CD8-positive, alpha-beta T cell (primary cell): ENCODE measurements at regions of chr1 and their contacts with region 1.

Region 1: GRCh38 chr1:244964112-244964971 is 100.0 kb upstream of the HNRNPU start:
- DNase-seq: peak in 4 of 9 experiments; percentile 19 to 63 (median 36)
- ATAC-seq: no peak
- H3K4me3 ChIP-seq: no peak overlapping the region
- H3K4me3 Mint-ChIP-seq: no peak overlapping the region
- H3K27ac ChIP-seq: no peak overlapping the region
- H3K27ac Mint-ChIP-seq: no peak overlapping the region
- H3K4me1 ChIP-seq: peaks cover 17% of the 10 kb centered on the region
- H3K4me1 Mint-ChIP-seq: peaks cover 18% of the 10 kb centered on the region
- H3K27me3 ChIP-seq: no peaks in the 10 kb centered on the region
- H3K27me3 Mint-ChIP-seq: no peaks in the 10 kb centered on the region
- CTCF ChIP-seq: no peak

Region 2: GRCh38 chr1:244576259-244576892 is 388.0 kb before region 1 on chr1:
- CTCF ChIA-PET with region 1: no interaction called
- POLR2A ChIA-PET with region 1: no interaction called
- intact Hi-C with region 1: no loop called
- DNase-seq: no peak
- ATAC-seq: no peak
- H3K4me3 ChIP-seq: no peak overlapping the region
- H3K4me3 Mint-ChIP-seq: no peak overlapping the region
- H3K27ac ChIP-seq: no peak overlapping the region
- H3K27ac Mint-ChIP-seq: no peak overlapping the region
- H3K4me1 ChIP-seq: no peaks in the 10 kb centered on the region
- H3K4me1 Mint-ChIP-seq: no peaks in the 10 kb centered on the region
- H3K27me3 ChIP-seq: no peaks in the 10 kb centered on the region
- H3K27me3 Mint-ChIP-seq: no peaks in the 10 kb centered on the region
- CTCF ChIP-seq: no peak

Region 3: DNA sequence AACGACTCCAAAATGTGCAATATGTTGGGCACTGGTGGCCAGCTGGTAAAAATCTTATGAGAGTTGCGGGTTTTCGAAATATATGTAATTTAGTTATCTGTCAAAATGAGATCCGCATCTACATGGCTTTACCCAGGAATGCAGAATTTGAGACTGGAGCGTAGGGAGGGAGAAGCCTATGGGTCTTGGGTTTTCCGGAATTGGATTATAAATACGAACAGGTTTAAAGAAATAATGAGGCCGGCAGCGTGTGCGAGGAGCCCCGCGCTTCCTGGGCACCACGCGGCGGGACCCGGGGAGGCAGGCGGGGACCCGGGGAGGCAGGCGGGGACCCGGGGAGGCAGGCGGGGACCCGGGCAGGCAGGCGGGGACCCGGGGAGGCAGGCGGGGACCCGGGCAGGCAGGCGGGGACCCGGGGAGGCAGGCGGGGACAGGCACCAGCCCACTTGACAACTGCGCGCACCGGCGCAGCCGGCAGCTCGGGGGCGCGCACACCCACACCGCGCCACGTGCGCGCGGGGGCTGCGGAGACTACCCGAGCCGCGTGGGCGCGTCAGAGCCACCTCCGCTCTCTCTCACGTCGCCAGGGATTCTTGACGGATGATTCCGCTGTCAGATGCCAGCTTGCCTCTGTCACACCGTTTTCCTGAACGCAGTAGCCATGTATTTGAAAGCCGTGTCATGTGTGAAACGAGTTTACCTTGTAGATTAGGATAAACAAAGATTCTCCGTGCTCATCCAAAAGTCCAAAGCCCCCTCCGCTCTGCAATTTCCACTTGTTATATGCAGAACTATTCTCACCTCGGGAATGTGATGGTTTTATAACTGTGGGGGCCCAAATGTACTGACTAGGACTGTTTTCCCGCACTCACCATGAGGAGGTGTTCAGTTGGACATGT is 45.7 kb before region 1 on chr1:
- CTCF ChIA-PET with region 1: interaction called, 3 read pairs
- POLR2A ChIA-PET with region 1: interaction called, 8 read pairs
- intact Hi-C with region 1: loop called (anchors 1 to 2 kb)
- DNase-seq: peak; percentile 36 to 91 (median 68)
- ATAC-seq: peak; percentile 96
- H3K4me3 ChIP-seq: peak overlapping the region; percentile 55
- H3K4me3 Mint-ChIP-seq: peak overlapping the region; percentile 86
- H3K27ac ChIP-seq: peak overlapping the region in 1 of 2 experiments; percentile 33
- H3K27ac Mint-ChIP-seq: peak overlapping the region; percentile 64
- H3K4me1 ChIP-seq: peaks cover 6% of the 10 kb centered on the region
- H3K4me1 Mint-ChIP-seq: peaks cover 11% of the 10 kb centered on the region
- H3K27me3 ChIP-seq: no peaks in the 10 kb centered on the region
- H3K27me3 Mint-ChIP-seq: no peaks in the 10 kb centered on the region
- CTCF ChIP-seq: no peak